ENCODE measurements at regions of chr3 and their contacts with region 1.

Region 1: DNA sequence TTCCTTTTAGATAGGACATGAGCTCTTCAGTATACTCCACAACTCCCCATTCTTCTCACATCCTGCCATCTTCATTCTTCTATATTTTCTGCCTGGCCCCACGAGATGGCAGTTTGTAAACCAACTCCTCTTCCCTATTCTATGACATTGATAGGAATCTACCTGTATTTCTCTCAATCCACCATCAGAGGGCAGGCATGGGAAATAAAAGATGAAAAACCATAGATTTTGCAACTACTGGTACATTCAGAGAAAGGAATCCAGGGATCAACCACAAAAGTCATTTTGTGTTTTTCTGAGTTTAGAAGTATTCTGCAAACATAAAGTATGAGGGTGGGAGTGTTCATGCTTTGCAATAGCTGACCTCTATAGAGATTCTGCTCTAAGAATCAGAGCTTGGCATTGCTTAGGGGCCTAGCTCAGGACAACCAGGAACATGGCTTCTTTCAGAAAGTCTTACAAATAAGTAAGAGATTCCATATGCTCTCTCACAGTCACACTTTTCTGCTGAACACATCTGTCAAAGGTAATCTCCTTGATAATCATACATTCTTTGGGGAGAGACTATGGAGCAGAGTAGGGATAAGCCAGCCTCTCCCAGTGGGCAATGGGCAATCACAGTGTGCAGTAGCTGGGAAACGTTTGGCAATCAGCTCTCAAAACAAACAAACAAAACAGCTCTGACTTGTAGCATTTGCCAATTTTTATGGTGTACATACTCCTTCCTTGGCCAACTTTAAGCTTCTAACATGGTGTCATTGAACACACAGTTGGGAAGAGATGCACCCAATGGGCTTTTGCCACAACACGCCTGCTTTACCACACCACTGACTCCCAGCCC is 43.1 kb upstream of the SLC25A36 start:
- DNase-seq: peak; percentile 7
- ATAC-seq: peak; percentile 86
- H3K4me3 ChIP-seq: no peak overlapping the region
- H3K27ac ChIP-seq: no peak overlapping the region
- H3K4me1 ChIP-seq: no peaks in the 10 kb centered on the region
- H3K27me3 ChIP-seq: no peaks in the 10 kb centered on the region
- CTCF ChIP-seq: peak; percentile 54 to 60 (median 56)
- EP300 ChIP-seq: no peak
- POLR2A ChIP-seq: no peak
- RAD21 ChIP-seq: peak; percentile 80

Region 2: GRCh38 chr3:140794507-140794906 is 104.1 kb before region 1 on chr3:
- CTCF ChIA-PET with region 1: no interaction called
- POLR2A ChIA-PET with region 1: no interaction called
- RAD21 ChIA-PET with region 1: no interaction called
- SMC1A ChIA-PET with region 1: no interaction called
- in situ Hi-C with region 1: no loop called
- intact Hi-C with region 1: no loop called
- DNase-seq: no peak
- ATAC-seq: no peak
- H3K4me3 ChIP-seq: no peak overlapping the region
- H3K27ac ChIP-seq: no peak overlapping the region
- H3K4me1 ChIP-seq: no peaks in the 10 kb centered on the region
- H3K27me3 ChIP-seq: no peaks in the 10 kb centered on the region
- CTCF ChIP-seq: no peak
- EP300 ChIP-seq: no peak
- POLR2A ChIP-seq: no peak
- RAD21 ChIP-seq: no peak

Region 3: GRCh38 chr3:140859592-140860336 is 38.8 kb before region 1 on chr3:
- CTCF ChIA-PET with region 1: no interaction called
- POLR2A ChIA-PET with region 1: no interaction called
- RAD21 ChIA-PET with region 1: no interaction called
- SMC1A ChIA-PET with region 1: no interaction called
- in situ Hi-C with region 1: no loop called
- intact Hi-C with region 1: no loop called
- DNase-seq: no peak
- ATAC-seq: peak; percentile 75
- H3K4me3 ChIP-seq: no peak overlapping the region
- H3K27ac ChIP-seq: no peak overlapping the region
- H3K4me1 ChIP-seq: no peaks in the 10 kb centered on the region
- H3K27me3 ChIP-seq: no peaks in the 10 kb centered on the region; a peak in 1 of 4 replicates
- CTCF ChIP-seq: no peak
- EP300 ChIP-seq: no peak
- POLR2A ChIP-seq: no peak
- RAD21 ChIP-seq: no peak

Region 4: GRCh38 chr3:140870370-140870769 is 28.2 kb before region 1 on chr3:
- CTCF ChIA-PET with region 1: no interaction called
- POLR2A ChIA-PET with region 1: no interaction called
- RAD21 ChIA-PET with region 1: no interaction called
- SMC1A ChIA-PET with region 1: no interaction called
- in situ Hi-C with region 1: no loop called
- intact Hi-C with region 1: no loop called
- DNase-seq: no peak
- ATAC-seq: no peak
- H3K4me3 ChIP-seq: no peak overlapping the region
- H3K27ac ChIP-seq: no peak overlapping the region
- H3K4me1 ChIP-seq: no peaks in the 10 kb centered on the region
- H3K27me3 ChIP-seq: no peaks in the 10 kb centered on the region
- CTCF ChIP-seq: no peak
- EP300 ChIP-seq: no peak
- POLR2A ChIP-seq: no peak
- RAD21 ChIP-seq: no peak

Region 5: GRCh38 chr3:140972833-140973232 is 74.3 kb after region 1 on chr3:
- CTCF ChIA-PET with region 1: interaction called, 30 read pairs
- POLR2A ChIA-PET with region 1: no interaction called
- RAD21 ChIA-PET with region 1: interaction called, 4 read pairs
- SMC1A ChIA-PET with region 1: interaction called, 12 read pairs
- in situ Hi-C with region 1: no loop called
- intact Hi-C with region 1: loop called (anchors 5 kb)
- DNase-seq: no peak
- ATAC-seq: peak; percentile 74
- H3K4me3 ChIP-seq: no peak overlapping the region
- H3K27ac ChIP-seq: no peak overlapping the region
- H3K4me1 ChIP-seq: no peaks in the 10 kb centered on the region
- H3K27me3 ChIP-seq: no peaks in the 10 kb centered on the region
- CTCF ChIP-seq: peak; percentile 22 to 44 (median 23); a peak in 2 of 6 replicates
- EP300 ChIP-seq: no peak
- POLR2A ChIP-seq: no peak
- RAD21 ChIP-seq: no peak

Region 6: DNA sequence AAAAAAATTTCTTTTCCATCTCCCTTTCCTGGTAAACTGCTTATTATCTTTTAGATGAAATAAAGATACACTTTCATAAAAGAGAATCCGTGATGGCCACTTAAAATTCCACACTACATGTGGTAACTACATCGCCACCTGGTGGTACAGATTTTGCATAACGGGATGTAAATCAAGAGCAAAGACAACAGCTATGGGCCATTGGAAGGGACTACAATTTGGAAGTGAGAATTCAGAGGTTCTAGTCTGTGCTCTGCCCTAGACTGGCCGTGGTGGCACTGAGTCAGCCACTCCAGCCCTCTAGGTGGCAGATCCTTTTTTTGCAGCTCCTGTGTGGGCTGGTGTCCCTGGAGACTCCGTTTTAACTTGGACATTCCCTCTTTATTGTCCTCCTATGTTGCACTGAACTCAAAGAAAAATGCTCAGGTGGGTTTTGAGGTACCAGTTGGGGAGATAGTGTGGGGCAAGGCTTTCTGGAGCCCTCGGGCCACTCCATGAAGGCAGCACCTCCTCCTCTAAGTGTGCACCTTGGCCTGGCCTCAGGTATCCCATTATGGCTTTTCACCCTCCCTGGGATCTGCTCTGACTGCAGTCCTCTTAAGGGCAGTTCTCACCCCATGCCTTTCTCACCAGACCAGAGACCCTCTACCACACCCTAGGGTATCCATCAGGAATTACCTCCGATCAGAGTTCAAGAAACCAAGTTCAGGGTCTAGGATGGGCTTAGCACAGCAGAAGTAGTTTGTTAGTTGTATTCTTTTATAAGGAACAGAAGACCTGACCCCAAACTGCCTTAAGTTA is 207.5 kb after region 1 on chr3:
- CTCF ChIA-PET with region 1: interaction called, 9 read pairs
- POLR2A ChIA-PET with region 1: no interaction called
- RAD21 ChIA-PET with region 1: no interaction called
- SMC1A ChIA-PET with region 1: no interaction called
- in situ Hi-C with region 1: loop called (anchors 5 kb)
- intact Hi-C with region 1: loop called (anchors 2 kb)
- DNase-seq: peak; percentile 20
- ATAC-seq: peak; percentile 81
- H3K4me3 ChIP-seq: no peak overlapping the region
- H3K27ac ChIP-seq: no peak overlapping the region
- H3K4me1 ChIP-seq: no peaks in the 10 kb centered on the region
- H3K27me3 ChIP-seq: no peaks in the 10 kb centered on the region
- CTCF ChIP-seq: peak; percentile 72 to 81 (median 74)
- EP300 ChIP-seq: no peak
- POLR2A ChIP-seq: no peak
- RAD21 ChIP-seq: peak; percentile 73

Region 7: GRCh38 chr3:141192345-141192744 is 293.8 kb after region 1 on chr3:
- CTCF ChIA-PET with region 1: interaction called, 8 read pairs
- POLR2A ChIA-PET with region 1: no interaction called
- RAD21 ChIA-PET with region 1: no interaction called
- SMC1A ChIA-PET with region 1: interaction called, 4 read pairs
- in situ Hi-C with region 1: loop called (anchors 5 kb)
- intact Hi-C with region 1: loop called (anchors 1 kb)
- DNase-seq: peak; percentile 64
- ATAC-seq: peak; percentile 100
- H3K4me3 ChIP-seq: no peak overlapping the region
- H3K27ac ChIP-seq: no peak overlapping the region
- H3K4me1 ChIP-seq: no peaks in the 10 kb centered on the region
- H3K27me3 ChIP-seq: no peaks in the 10 kb centered on the region; a peak in 1 of 4 replicates
- CTCF ChIP-seq: peak; percentile 93 to 99 (median 94)
- EP300 ChIP-seq: no peak
- POLR2A ChIP-seq: no peak
- RAD21 ChIP-seq: peak; percentile 90

Measured in GM12878 (cell line).